ENCODE measurements at regions of chr14 and their contacts with region 1.

Region 1: GRCh38 chr14:70359181-70360090 is at the start of gene COX16:
- DNase-seq: peak; percentile 96
- H3K4me3 ChIP-seq: peak within 1 kb of the TSS; percentile 76
- H3K27ac ChIP-seq: peak within 1 kb of the TSS; percentile 81
- H3K4me1 ChIP-seq: peaks cover 5% of the 10 kb centered on the region
- H3K27me3 ChIP-seq: no peaks in the 10 kb centered on the region
- CTCF ChIP-seq: no peak
- total RNA-seq, gene COX16: 55.5 and 59.8 TPM in 2 replicates

Region 2: DNA sequence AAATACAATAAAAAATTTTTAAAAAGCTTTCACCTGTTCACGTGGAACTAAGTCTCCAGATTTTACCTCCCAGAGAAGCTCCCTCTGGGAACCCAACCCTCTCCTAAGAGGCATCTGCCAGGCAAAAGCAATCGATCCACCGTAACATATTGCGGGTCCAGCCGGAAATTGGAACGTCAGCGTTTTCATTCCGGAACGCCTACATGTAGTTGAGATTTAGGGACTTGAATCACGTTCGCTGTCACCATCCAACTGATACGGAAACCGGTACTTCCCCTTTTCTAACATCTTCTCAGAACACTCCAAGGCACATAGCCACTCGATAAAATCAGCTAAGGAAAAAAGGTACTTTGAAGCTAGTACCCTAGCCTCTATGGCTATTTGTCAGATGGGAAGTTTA is 70.3 kb before region 1 on chr14:
- CTCF ChIA-PET with region 1: no interaction called
- POLR2A ChIA-PET with region 1: no interaction called
- intact Hi-C with region 1: loop called (anchors 2 kb)
- DNase-seq: peak; percentile 48
- H3K4me3 ChIP-seq: no peak overlapping the region
- H3K27ac ChIP-seq: no peak overlapping the region
- H3K4me1 ChIP-seq: no peaks in the 10 kb centered on the region
- H3K27me3 ChIP-seq: peaks cover 5% of the 10 kb centered on the region
- CTCF ChIP-seq: no peak